ENCODE measurements at regions of chr15 and their contacts with region 1.

Region 1: GRCh38 chr15:58749532-58750337 is at the start of gene ADAM10:
- DNase-seq: peak; percentile 99 to 100
- ATAC-seq: peak; percentile 97 to 99 (median 98)
- H3K4me3 ChIP-seq: peak within 1 kb of the TSS; percentile 97
- H3K27ac ChIP-seq: peak within 1 kb of the TSS; percentile 98
- H3K4me1 ChIP-seq: peaks cover 23% of the 10 kb centered on the region
- H3K27me3 ChIP-seq: no peaks in the 10 kb centered on the region
- CTCF ChIP-seq: no peak
- total RNA-seq, gene ADAM10: 33.1 to 37.9 (median 36.5) TPM

Region 2: GRCh38 chr15:58438956-58439355 is 310.8 kb before region 1 on chr15:
- intact Hi-C with region 1: loop called in 1 of 2 experiments (anchors 10 kb)
- DNase-seq: no peak
- ATAC-seq: peak; percentile 60 to 84 (median 76)
- H3K4me3 ChIP-seq: no peak overlapping the region
- H3K27ac ChIP-seq: no peak overlapping the region
- H3K4me1 ChIP-seq: peaks cover 32% of the 10 kb centered on the region
- H3K27me3 ChIP-seq: no peaks in the 10 kb centered on the region
- CTCF ChIP-seq: peak; percentile 18

Region 3: DNA sequence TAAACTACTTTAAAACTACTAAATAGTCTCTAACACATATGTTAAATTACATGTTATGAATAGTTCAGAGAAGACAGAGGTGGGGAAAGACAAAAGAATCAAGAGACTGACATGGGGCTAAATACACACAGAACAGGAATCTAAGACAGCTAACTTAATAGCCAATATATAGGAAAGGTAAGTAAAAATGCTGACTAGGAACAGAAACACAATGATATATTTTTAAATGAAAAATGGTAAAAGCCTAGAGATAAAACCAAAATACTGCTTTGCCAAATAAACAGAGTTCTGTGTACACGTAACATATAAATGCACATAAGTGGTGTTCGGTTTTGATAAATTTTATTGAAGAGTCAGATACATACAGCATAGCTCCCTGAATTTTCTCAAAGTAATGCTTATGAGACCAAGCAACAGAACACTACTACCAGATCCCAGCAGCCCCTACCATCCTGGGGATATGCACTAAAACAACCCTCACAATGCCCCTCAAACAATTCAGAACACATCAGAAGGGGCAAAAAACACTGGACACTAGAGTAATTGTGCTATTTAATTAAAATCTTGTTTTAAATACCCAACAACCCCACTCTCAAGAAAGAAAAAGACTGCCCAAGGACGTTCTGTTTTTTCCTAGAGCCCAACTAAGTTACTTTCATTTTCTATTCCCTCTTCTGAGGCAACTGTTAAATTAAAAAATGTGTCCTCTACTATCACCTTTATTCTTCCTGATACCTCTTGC is 121.4 kb before region 1 on chr15:
- intact Hi-C with region 1: loop called in 1 of 2 experiments (anchors 5 kb)
- DNase-seq: no peak
- ATAC-seq: no peak
- H3K4me3 ChIP-seq: peak overlapping the region; percentile 52
- H3K27ac ChIP-seq: peak overlapping the region; percentile 46
- H3K4me1 ChIP-seq: peaks cover 17% of the 10 kb centered on the region
- H3K27me3 ChIP-seq: no peaks in the 10 kb centered on the region
- CTCF ChIP-seq: no peak

Measured in psoas muscle (tissue), 8 donors.